ENCODE measurements at regions of chr1 and their contacts with region 1.

Region 1: GRCh38 chr1:221187174-221187573 is 307.9 kb downstream of the HLX start:
- DNase-seq: no peak

Region 2: GRCh38 chr1:220233927-220234326 is 953.2 kb before region 1 on chr1:
- CTCF ChIA-PET with region 1: interaction called, 11 read pairs
- POLR2A ChIA-PET with region 1: no interaction called
- DNase-seq: no peak

Region 3: DNA sequence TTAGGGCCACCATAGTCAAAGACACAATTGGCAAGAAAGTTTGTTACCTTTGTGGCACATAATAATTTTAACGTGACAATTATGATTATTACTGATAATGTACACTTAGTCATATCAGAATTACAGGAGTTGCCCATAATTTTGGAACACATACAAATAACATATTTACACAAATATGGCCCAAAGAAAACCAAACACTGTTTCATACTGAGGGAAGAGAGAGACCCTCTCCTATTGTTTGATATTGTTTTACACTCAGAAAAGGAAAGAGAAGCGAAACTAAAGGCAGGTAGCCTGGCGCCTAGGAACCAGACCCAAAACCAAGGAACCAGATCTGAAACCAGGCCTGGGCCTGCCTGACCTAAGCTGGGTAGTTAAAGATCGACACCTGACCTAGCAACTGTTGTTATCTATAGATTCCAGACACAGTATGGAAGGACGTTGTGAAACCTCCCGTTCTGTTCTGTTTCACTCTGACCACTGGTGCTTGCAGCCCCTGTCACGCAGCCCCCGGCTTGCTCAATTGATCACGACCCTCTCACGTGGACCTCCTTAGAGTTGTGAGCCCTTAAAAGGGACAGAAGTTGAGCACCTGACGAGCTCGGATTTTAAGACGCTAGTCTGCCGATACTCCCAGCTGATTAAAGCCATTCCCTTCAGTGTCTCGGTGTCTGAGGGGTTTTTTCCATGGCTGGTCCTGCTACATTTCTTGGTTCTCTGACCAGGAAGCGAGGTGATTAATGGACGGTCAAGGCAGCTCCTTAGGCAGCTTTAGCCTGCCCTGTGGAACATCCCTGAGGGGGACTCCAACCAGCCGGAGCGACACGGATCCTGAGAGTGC is 469.2 kb before region 1 on chr1:
- CTCF ChIA-PET with region 1: no interaction called
- POLR2A ChIA-PET with region 1: no interaction called
- DNase-seq: no peak